ENCODE measurements at regions of chrX and their contacts with region 1.

Region 1: DNA sequence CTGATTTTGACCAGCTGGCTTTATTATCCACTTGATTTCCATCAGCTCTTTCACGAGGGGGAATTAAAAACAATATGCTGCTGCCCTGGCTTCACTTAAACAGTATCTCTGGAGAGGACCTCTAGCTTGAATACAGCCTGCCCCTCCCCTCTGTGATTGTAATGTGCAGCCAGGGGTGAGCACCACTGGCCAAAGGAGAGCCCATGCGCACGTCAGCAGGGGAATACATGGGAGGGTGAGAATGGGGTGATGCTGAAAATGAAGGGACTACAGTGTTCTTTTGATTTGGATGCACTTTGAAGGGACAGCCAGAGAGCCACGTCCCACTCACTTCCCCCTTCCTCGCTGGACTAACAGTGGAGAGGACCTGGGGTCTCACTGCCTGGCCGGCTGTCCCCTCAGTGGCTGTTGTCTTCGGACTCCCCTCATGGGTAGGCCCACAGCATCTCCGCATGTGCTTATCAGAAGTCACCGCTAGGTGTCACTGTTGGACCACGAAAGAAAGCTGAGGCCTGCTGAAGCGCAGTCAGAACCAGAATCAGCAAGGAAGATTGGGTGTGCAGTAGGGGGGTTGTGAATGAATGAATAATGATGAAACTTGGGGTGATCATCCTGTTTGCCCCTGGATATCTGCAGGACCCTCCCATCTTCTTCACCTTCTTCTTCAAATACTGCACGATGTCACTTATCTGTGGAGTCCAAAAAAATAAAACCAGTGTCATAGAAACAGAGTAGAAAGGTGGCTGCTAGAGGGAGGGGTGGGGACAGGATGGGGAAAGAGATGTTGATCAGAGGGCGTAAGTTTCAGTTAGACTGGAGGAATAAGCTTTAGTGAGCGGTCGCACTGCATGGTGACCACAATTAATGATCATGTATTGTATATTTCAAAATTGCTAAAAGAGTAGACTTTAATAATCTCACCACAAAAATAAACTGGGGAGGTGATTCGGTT is 32.8 kb downstream of the CLCN4 start:
- DNase-seq: peak in 1 of 2 experiments; percentile 83
- H3K4me3 ChIP-seq: no peak overlapping the region
- H3K27ac ChIP-seq: no peak overlapping the region
- H3K4me1 ChIP-seq: no peaks in the 10 kb centered on the region; a peak in 2 of 7 replicates
- H3K27me3 ChIP-seq: no peaks in the 10 kb centered on the region
- CTCF ChIP-seq: peak; percentile 58 to 72 (median 71)
- EP300 ChIP-seq: peak in 1 of 2 experiments; percentile 73; a peak in 1 of 3 replicates
- POLR2A ChIP-seq: no peak
- RAD21 ChIP-seq: peak; percentile 88 to 91

Region 2: DNA sequence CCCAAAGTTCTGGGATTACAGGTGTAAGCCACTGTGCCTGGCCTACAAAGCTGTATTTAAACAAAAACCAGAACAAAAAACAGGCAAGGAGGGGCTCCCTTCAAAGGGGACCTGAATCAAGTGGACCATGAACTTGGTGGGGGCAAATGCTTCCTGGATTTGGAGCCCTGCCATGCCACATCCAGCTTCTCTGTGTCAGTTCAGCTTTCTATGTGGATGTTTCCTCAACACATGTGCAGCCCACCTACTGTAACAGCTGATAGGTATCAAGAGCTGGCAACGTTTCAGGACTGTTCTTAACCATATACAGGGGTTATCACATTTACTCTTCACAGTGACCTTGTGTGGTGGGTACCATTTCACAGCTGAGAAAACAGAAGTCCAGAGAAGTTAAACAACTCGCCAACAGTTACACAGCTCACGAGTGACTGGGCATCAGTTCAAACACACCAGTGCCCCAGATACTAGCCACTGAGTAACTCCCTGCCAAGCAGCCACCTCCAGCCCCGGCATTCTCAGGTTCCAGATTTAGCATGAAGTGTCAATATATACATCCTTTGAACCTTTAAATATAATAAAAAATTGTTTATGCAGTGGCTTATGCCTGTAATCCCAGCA is 431.5 kb before region 1 on chrX:
- CTCF ChIA-PET with region 1: no interaction called
- POLR2A ChIA-PET with region 1: no interaction called
- DNase-seq: no peak
- H3K4me3 ChIP-seq: no peak overlapping the region
- H3K27ac ChIP-seq: no peak overlapping the region
- H3K4me1 ChIP-seq: no peaks in the 10 kb centered on the region
- H3K27me3 ChIP-seq: no peaks in the 10 kb centered on the region
- CTCF ChIP-seq: no peak
- EP300 ChIP-seq: no peak
- POLR2A ChIP-seq: no peak
- RAD21 ChIP-seq: no peak

Region 3: GRCh38 chrX:10636337-10636736 is 446.7 kb after region 1 on chrX:
- CTCF ChIA-PET with region 1: interaction called, 20 read pairs
- POLR2A ChIA-PET with region 1: interaction called, 3 read pairs
- DNase-seq: no peak
- H3K4me3 ChIP-seq: no peak overlapping the region
- H3K27ac ChIP-seq: no peak overlapping the region
- H3K4me1 ChIP-seq: peaks cover 0 to 6% (median 0%) of the 10 kb centered on the region in 4 experiments; a peak in 2 of 7 replicates
- H3K27me3 ChIP-seq: no peaks in the 10 kb centered on the region
- CTCF ChIP-seq: peak in 2 of 3 experiments; percentile 68 to 69; a peak in 3 of 4 replicates
- EP300 ChIP-seq: no peak
- POLR2A ChIP-seq: no peak
- RAD21 ChIP-seq: peak; percentile 86 to 91

Region 4: GRCh38 chrX:10769195-10769594 is 579.6 kb after region 1 on chrX:
- CTCF ChIA-PET with region 1: interaction called, 11 read pairs
- POLR2A ChIA-PET with region 1: no interaction called
- DNase-seq: no peak
- H3K4me3 ChIP-seq: peak overlapping the region in 1 of 4 experiments; percentile 30; a peak in 1 of 8 replicates
- H3K27ac ChIP-seq: no peak overlapping the region
- H3K4me1 ChIP-seq: peaks cover 0 to 3% (median 0%) of the 10 kb centered on the region in 4 experiments; a peak in 2 of 7 replicates
- H3K27me3 ChIP-seq: no peaks in the 10 kb centered on the region
- CTCF ChIP-seq: peak in 2 of 3 experiments; percentile 26 to 45; a peak in 2 of 4 replicates
- EP300 ChIP-seq: no peak
- POLR2A ChIP-seq: no peak
- RAD21 ChIP-seq: peak; percentile 51 to 60